ENCODE measurements at regions of chr22 and their contacts with region 1.

Region 1: DNA sequence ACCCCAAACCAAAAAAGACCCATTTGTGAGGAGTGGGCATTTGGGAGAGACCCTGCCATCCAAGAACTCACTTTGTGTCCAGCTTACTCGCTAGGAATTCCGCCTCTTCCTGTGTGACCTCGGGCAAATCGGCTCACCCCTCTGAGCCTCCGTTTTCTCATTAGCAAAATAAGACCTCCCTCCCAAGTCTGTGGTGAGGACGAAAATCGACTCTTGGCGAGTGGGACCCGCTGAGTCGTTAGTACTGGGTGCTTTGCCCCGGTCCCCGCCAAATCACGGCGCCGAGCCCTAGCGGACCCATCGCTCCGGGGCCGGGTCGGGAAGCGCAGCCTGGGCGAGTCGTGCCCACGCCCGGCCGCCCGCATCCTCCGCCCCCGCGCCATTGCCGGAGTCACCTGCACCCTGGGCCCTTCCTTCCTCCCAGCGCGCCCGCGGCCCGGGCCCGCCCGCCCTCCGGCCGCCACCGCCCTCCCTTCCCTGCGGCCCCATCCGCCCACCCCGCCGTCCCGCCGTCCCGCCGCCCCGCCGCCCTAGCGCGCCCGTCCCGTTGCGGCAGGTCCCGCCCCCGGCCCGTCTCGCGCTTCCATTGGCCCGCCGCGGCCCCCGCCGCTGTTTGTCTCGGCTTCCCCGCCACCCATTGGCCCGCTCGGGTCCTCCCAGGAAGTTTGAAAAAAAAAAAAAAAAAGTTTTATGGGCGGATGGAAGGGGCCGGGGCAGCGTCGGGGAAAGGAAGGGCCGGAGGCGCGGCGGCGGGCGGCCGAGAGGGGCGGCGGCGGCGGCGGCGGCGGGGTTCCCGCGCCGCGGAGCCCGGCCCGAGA is 48.9 kb downstream of the TRIOBP start:
- DNase-seq: peak; percentile 90
- ATAC-seq: peak; percentile 96
- H3K4me3 ChIP-seq: peak overlapping the region; percentile 66 to 85 (median 73)
- H3K4me3 Mint-ChIP-seq: peak overlapping the region; percentile 93
- H3K27ac ChIP-seq: peak overlapping the region in 1 of 2 donors; percentile 74
- H3K27ac Mint-ChIP-seq: peak overlapping the region; percentile 87
- H3K4me1 ChIP-seq: peaks cover 14 to 20% of the 10 kb centered on the region in 2 donors
- H3K4me1 Mint-ChIP-seq: peaks cover 24% of the 10 kb centered on the region
- H3K27me3 ChIP-seq: no peaks in the 10 kb centered on the region
- H3K27me3 Mint-ChIP-seq: no peaks in the 10 kb centered on the region
- CTCF ChIP-seq: no peak

Region 2: GRCh38 chr22:37686002-37686982 is 59.5 kb before region 1 on chr22 and contains the start of gene NOL12:
- CTCF ChIA-PET with region 1: no interaction called
- POLR2A ChIA-PET with region 1: no interaction called
- intact Hi-C with region 1: loop called (anchors 1 kb)
- DNase-seq: peak; percentile 93
- ATAC-seq: peak; percentile 86
- H3K4me3 ChIP-seq: peak within 1 kb of the TSS; percentile 79 to 98 (median 88)
- H3K4me3 Mint-ChIP-seq: peak within 1 kb of the TSS; percentile 99
- H3K27ac ChIP-seq: peak within 1 kb of the TSS; percentile 70 to 81
- H3K27ac Mint-ChIP-seq: peak within 1 kb of the TSS; percentile 95
- H3K4me1 ChIP-seq: peaks cover 10 to 30% of the 10 kb centered on the region in 2 donors
- H3K4me1 Mint-ChIP-seq: peaks cover 28% of the 10 kb centered on the region
- H3K27me3 ChIP-seq: no peaks in the 10 kb centered on the region
- H3K27me3 Mint-ChIP-seq: no peaks in the 10 kb centered on the region
- CTCF ChIP-seq: no peak
- total RNA-seq, gene NOL12: 34.7 and 38.5 TPM in 2 replicates

Region 3: GRCh38 chr22:37777122-37777687 is 31.4 kb after region 1 on chr22:
- CTCF ChIA-PET with region 1: no interaction called
- POLR2A ChIA-PET with region 1: no interaction called
- intact Hi-C with region 1: no loop called
- DNase-seq: no peak
- ATAC-seq: peak; percentile 33
- H3K4me3 ChIP-seq: no peak overlapping the region
- H3K4me3 Mint-ChIP-seq: no peak overlapping the region
- H3K27ac ChIP-seq: no peak overlapping the region
- H3K27ac Mint-ChIP-seq: no peak overlapping the region
- H3K4me1 ChIP-seq: peaks cover 0 to 10% of the 10 kb centered on the region in 2 donors
- H3K4me1 Mint-ChIP-seq: peaks cover 12% of the 10 kb centered on the region
- H3K27me3 ChIP-seq: no peaks in the 10 kb centered on the region
- H3K27me3 Mint-ChIP-seq: no peaks in the 10 kb centered on the region
- CTCF ChIP-seq: no peak

Region 4: GRCh38 chr22:37843741-37843990 is 97.9 kb after region 1 on chr22:
- CTCF ChIA-PET with region 1: no interaction called
- POLR2A ChIA-PET with region 1: no interaction called
- intact Hi-C with region 1: loop called (anchors 5 kb)
- DNase-seq: no peak
- ATAC-seq: peak; percentile 35
- H3K4me3 ChIP-seq: peak overlapping the region; percentile 46 to 78 (median 65)
- H3K4me3 Mint-ChIP-seq: peak overlapping the region; percentile 91
- H3K27ac ChIP-seq: peak overlapping the region in 1 of 2 donors; percentile 76
- H3K27ac Mint-ChIP-seq: peak overlapping the region; percentile 87
- H3K4me1 ChIP-seq: peaks cover 11 to 25% of the 10 kb centered on the region in 2 donors
- H3K4me1 Mint-ChIP-seq: peaks cover 16% of the 10 kb centered on the region
- H3K27me3 ChIP-seq: no peaks in the 10 kb centered on the region
- H3K27me3 Mint-ChIP-seq: no peaks in the 10 kb centered on the region
- CTCF ChIP-seq: no peak